Stomach (tissue), 19 donors: ENCODE measurements at regions of chr3 and their contacts with region 1.

Region 1: DNA sequence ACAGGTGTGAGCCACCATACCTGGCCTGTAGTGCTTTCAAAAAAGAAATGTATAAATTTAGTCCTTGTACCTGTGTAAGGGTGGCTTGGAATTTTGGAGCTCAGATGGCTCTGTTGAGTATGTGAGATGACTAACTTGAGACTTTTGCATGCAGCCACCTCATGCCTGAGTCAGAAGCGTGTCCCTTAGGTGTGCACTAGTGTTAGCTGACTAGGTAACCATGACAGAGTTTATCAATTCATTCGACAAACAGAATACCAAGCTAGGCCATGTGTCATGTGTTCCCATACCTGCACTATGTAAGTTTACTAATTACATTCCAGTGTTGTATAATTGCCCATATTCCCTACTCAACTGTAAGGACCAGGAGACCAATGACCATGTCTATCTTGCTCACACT is 4.0 kb upstream of the ZNF639 start:
- DNase-seq: no peak
- H3K4me3 ChIP-seq: no peak overlapping the region
- H3K27ac ChIP-seq: no peak overlapping the region
- H3K4me1 ChIP-seq: peaks cover 14 to 29% (median 16%) of the 10 kb centered on the region in 4 donors
- H3K27me3 ChIP-seq: no peaks in the 10 kb centered on the region
- CTCF ChIP-seq: no peak
- EP300 ChIP-seq: no peak
- POLR2A ChIP-seq: no peak

Region 2: DNA sequence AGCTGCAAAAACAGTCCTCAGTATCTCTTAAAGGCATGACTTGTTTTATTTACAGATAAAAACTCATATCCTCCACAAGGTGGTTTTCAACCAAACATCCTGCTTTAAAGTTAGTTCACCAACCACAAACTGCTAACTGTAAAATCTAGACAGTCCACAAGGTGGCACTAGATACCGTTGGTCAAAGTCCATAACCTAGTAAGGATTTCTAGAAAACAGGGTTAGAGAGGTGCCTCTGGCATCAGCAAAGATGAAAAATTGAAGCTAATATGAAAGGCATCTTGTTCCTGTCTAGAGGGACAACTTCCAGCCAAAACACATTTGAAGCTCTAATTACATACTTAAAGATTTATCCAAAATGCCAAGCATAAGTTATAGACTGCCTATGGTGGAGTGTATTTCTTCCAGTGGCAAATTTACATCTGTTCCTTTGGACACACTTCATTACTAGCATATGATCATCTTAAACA is 303.3 kb before region 1 on chr3:
- intact Hi-C with region 1: loop called (anchors 5 kb)
- DNase-seq: peak; percentile 28 to 92
- H3K4me3 ChIP-seq: no peak overlapping the region
- H3K27ac ChIP-seq: no peak overlapping the region
- H3K4me1 ChIP-seq: peaks cover 0 to 15% (median 5%) of the 10 kb centered on the region in 4 donors
- H3K27me3 ChIP-seq: no peaks in the 10 kb centered on the region
- CTCF ChIP-seq: peak in 5 of 7 experiments; percentile 76 to 84 (median 82)
- EP300 ChIP-seq: no peak
- POLR2A ChIP-seq: no peak

Region 3: DNA sequence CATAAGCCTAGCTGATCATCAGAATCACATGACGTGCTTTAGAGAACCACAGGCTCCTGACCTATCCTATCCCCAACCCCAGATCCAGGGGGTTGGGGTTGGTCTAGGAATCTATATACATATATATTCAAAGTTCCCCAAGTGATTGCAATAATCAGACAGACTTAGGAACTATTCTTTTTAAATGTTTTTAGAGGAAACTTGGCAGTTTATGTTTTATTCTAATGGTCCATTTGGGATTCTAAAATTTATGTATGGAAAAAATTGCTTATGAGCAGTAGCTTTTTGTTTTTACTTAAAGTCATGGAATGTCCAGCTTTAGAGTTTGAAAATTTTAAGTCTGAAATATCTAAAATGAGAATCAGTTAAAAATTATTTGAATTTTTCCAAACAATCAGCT is 50.7 kb after region 1 on chr3:
- intact Hi-C with region 1: no loop called
- DNase-seq: no peak
- H3K4me3 ChIP-seq: no peak overlapping the region
- H3K27ac ChIP-seq: no peak overlapping the region
- H3K4me1 ChIP-seq: no peaks in the 10 kb centered on the region
- H3K27me3 ChIP-seq: no peaks in the 10 kb centered on the region
- CTCF ChIP-seq: no peak
- EP300 ChIP-seq: no peak
- POLR2A ChIP-seq: no peak